ENCODE measurements at regions of chr6 and their contacts with region 1.

Region 1: GRCh38 chr6:34757687-34758274 is 476 bp downstream of the SNRPC start:
- DNase-seq: no peak
- H3K4me3 ChIP-seq: peak overlapping the region; percentile 49 to 74
- H3K27ac ChIP-seq: peak overlapping the region; percentile 96
- H3K4me1 ChIP-seq: peaks cover 30% of the 10 kb centered on the region
- H3K27me3 ChIP-seq: no peaks in the 10 kb centered on the region
- CTCF ChIP-seq: no peak
- POLR2A ChIP-seq: no peak

Region 2: DNA sequence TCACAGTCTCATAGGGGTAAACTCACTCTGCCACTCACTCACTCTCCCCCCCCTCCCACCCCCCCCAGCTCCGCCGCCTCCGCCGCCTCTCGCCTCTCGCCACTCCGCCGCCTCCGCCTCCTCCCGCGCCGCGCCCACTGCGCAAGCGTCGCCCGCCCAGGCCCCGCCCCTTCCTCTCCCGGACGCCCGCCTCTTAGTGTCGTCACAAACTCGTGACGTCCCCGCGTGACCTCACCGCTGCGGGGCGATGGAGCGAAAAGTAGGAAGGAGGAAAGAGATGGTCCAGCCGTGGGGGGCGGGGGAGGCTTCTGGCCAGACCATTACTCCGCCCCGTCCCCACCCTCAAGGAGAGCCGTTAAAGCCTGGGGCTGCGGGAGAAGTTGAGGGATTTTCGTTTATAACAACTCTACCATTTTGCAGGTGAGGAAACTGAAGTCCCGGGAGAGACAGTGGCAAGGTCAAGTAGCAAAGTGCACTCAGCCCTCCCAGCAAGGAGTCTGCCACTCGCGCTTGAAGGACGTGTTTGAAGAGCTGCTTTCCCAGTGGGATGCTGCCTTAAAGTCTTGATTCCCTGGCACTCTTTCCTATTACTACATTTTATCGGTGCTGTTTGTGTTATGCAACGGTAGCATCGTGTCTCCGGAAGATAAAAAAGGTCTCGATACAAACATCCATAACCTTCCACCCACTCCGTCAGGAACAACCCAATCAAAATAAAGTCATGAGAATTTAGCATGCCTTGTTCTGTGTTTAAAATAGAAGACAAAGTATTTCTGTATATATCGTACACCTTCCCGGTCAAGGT is 60.8 kb before region 1 on chr6 and contains the start of gene ILRUN:
- intact Hi-C with region 1: loop called (anchors 5 kb)
- DNase-seq: peak; percentile 95 to 98
- H3K4me3 ChIP-seq: peak within 1 kb of the TSS; percentile 65 to 99
- H3K27ac ChIP-seq: peak within 1 kb of the TSS; percentile 98
- H3K4me1 ChIP-seq: peaks cover 38% of the 10 kb centered on the region
- H3K27me3 ChIP-seq: no peaks in the 10 kb centered on the region
- CTCF ChIP-seq: no peak
- POLR2A ChIP-seq: peak; percentile 66 to 90
- total RNA-seq, gene ILRUN: 48.4 TPM

Region 3: GRCh38 chr6:34982424-34982852 is 224.7 kb after region 1 on chr6:
- intact Hi-C with region 1: no loop called
- DNase-seq: no peak
- H3K4me3 ChIP-seq: no peak overlapping the region
- H3K27ac ChIP-seq: no peak overlapping the region
- H3K4me1 ChIP-seq: no peaks in the 10 kb centered on the region
- H3K27me3 ChIP-seq: no peaks in the 10 kb centered on the region
- CTCF ChIP-seq: no peak
- POLR2A ChIP-seq: no peak

Region 4: GRCh38 chr6:35089935-35090505 is 332.2 kb after region 1 on chr6:
- intact Hi-C with region 1: no loop called
- DNase-seq: no peak
- H3K4me3 ChIP-seq: no peak overlapping the region
- H3K27ac ChIP-seq: peak overlapping the region; percentile 31
- H3K4me1 ChIP-seq: peaks cover 31% of the 10 kb centered on the region
- H3K27me3 ChIP-seq: no peaks in the 10 kb centered on the region
- CTCF ChIP-seq: no peak
- POLR2A ChIP-seq: no peak